PC-3 (cell line): ENCODE measurements at regions of chr2 and their contacts with region 1.

Region 1: GRCh38 chr2:171416009-171416926 is 17.5 kb downstream of the METTL8 start:
- DNase-seq: peak; percentile 96
- ATAC-seq: peak; percentile 98
- H3K4me3 ChIP-seq: no peak overlapping the region
- H3K27ac ChIP-seq: peak overlapping the region; percentile 23; the same call in 1 of the 2 replicates
- H3K4me1 ChIP-seq: peaks cover 22% of the 10 kb centered on the region
- H3K27me3 ChIP-seq: no peaks in the 10 kb centered on the region
- CTCF ChIP-seq: peak; percentile 95

Region 2: GRCh38 chr2:170973492-170974303 is 442.6 kb before region 1 on chr2:
- CTCF ChIA-PET with region 1: interaction called, 4 read pairs
- POLR2A ChIA-PET with region 1: no interaction called
- intact Hi-C with region 1: loop called (anchors 1 kb)
- DNase-seq: peak; percentile 93
- ATAC-seq: peak; percentile 82
- H3K4me3 ChIP-seq: peak overlapping the region; percentile 89
- H3K27ac ChIP-seq: 0 out of 2 replicates have a peak overlapping the region, but pooled peaks have one; percentile 32
- H3K4me1 ChIP-seq: peaks cover 12% of the 10 kb centered on the region
- H3K27me3 ChIP-seq: no peaks in the 10 kb centered on the region
- CTCF ChIP-seq: peak; percentile 90

Region 3: DNA sequence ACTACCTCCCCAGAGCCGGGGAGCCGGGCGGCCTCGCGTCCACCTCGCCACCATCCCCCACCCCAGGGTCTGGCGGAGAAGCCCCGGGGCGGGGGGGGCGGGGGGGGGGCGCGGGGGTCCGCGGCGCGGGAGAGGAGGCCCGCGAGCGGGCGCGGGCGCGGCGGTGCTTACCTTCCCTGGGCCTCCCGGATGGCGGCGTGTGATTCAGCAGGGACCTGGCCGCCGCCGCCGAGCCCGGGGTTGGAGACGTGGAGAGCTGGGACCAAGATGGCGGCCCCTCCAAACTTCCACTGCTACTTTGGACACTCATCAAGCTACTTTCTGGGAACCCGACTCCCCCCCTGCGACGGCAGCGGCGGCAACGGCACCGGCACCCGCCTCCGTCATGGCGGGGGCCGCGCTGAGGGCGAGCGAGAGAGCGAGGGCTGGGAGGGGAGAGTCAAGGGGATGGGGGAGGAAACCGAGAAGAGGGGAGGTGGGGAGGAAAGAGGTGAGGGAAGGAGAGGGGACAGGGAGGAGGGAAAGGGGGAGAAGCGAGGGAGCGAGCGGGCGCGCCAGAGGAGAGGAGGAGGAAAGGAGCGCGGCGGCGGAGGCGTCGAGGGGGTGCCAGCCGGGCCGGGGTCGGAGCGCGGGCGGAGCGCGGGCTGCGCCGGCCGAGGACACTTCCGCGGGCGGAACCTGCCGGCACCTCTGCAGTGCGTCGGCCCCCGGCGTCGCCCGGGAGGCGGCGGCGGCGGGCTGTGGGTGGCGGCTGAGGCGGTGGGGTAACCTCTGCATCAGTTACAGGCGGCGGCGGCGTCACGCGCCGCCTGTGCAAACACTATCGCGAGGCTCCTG is 255.9 kb before region 1 on chr2 and contains the start of gene TLK1:
- CTCF ChIA-PET with region 1: interaction called, 6 read pairs
- POLR2A ChIA-PET with region 1: no interaction called
- intact Hi-C with region 1: loop called (anchors 1 kb)
- DNase-seq: peak; percentile 73
- ATAC-seq: peak; percentile 67
- H3K4me3 ChIP-seq: peak within 1 kb of the TSS; percentile 100
- H3K27ac ChIP-seq: peak within 1 kb of the TSS; percentile 84
- H3K4me1 ChIP-seq: peaks cover 10% of the 10 kb centered on the region
- H3K27me3 ChIP-seq: no peaks in the 10 kb centered on the region
- CTCF ChIP-seq: no peak
- total RNA-seq, gene TLK1: 10.1 and 17.6 TPM in 2 replicates

Region 4: GRCh38 chr2:171225302-171225980 is 190.8 kb before region 1 on chr2:
- CTCF ChIA-PET with region 1: no interaction called
- POLR2A ChIA-PET with region 1: no interaction called
- intact Hi-C with region 1: loop called (anchors 5 kb)
- DNase-seq: peak; percentile 93
- ATAC-seq: peak; percentile 86
- H3K4me3 ChIP-seq: no peak overlapping the region
- H3K27ac ChIP-seq: no peak overlapping the region
- H3K4me1 ChIP-seq: peaks cover 46% of the 10 kb centered on the region
- H3K27me3 ChIP-seq: no peaks in the 10 kb centered on the region
- CTCF ChIP-seq: peak; percentile 47

Region 5: DNA sequence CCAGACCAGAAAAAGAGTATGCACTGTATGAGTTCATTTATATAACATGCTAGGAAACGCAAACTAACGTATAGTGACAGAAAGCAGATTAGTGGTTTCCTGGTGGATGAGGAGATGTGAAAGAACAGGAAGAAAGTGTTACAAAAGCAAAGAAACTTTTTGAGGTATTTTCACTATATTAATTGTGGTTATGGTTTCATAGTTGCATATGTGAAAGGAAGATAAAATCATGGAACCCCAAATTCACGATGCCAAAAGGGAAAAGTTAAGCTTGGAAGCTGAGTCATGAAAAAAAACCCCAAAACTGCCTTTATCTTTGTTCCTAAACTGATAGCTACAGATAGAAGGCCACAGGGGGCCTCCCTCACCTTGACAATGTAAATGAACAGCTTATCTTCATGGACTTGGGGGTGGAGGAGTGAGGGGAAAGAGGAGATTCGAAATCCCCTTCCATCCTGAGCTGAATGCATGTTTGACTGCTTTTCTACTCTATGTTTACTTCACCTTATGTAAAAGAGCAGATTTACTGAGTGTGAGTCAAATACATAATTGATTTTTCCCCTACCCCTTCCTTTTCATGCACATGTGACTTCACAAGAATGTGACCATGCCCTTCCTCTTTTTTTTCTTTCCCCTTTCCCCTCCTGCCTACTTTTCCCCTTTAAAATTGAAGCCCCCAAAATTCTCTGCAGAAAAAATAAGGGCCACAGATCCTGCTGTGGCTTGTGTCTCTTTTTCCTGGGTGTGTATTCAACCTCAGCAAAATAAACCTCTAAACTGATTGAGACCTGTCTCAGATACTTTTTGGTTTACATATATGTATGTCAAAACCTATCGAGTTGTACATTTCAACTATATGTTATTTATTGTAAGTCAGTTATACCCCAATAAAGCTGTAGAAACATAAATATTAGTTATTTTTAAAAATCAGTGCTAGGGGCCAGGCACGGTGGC is 155.5 kb before region 1 on chr2:
- CTCF ChIA-PET with region 1: no interaction called
- POLR2A ChIA-PET with region 1: no interaction called
- intact Hi-C with region 1: no loop called
- DNase-seq: peak; percentile 12
- ATAC-seq: peak; percentile 76
- H3K4me3 ChIP-seq: no peak overlapping the region
- H3K27ac ChIP-seq: no peak overlapping the region
- H3K4me1 ChIP-seq: peaks cover 8% of the 10 kb centered on the region; the same call in 1 of the 2 replicates
- H3K27me3 ChIP-seq: no peaks in the 10 kb centered on the region
- CTCF ChIP-seq: no peak

Region 6: DNA sequence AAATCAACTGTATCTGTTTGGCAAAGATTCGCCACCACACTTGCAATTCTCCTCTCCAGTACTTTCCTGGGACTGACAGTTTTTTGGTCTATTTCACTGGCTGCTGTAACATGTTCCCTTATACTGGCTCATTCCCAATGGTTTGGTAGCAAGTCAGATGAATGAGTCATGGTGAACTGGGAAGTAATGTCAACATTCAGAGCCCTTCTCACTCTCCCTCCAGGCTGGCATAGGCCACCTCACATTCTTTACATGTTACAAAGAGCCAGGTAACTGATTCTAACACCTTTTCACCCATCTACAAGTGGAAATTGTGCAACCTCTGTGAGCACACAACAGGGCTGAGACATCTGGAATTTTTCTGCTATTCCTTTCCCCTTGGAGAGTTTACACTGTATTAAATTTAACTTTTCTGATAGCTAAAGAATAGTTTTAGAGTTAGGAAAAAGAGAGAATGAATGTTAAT is 144.3 kb before region 1 on chr2:
- CTCF ChIA-PET with region 1: no interaction called
- POLR2A ChIA-PET with region 1: no interaction called
- intact Hi-C with region 1: loop called (anchors 1 kb)
- DNase-seq: peak; percentile 98
- ATAC-seq: peak; percentile 99
- H3K4me3 ChIP-seq: peak overlapping the region; percentile 19; the same call in 1 of the 2 replicates
- H3K27ac ChIP-seq: peak overlapping the region; percentile 61
- H3K4me1 ChIP-seq: peaks cover 24% of the 10 kb centered on the region
- H3K27me3 ChIP-seq: no peaks in the 10 kb centered on the region
- CTCF ChIP-seq: no peak

Region 7: DNA sequence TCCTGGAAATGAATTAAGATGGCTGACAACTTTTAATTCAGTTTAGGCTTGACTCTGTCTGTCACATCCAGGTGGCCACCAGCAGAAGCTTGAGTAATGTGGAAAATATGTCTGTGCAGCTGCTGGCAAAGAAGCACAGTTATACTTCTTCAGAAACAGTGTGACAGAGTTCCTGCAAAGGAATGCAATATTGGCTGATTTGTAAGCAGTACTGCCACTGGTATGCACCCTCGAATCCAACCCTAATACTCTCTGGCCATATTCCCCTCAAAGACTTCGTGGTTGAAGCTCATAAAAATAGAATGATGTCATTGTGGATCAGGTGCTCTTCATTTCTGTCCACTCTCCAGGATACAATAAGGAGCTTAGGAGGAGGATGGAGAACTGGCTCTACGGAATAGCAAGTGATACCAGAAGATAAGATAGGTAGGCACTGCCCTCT is 68.7 kb before region 1 on chr2:
- CTCF ChIA-PET with region 1: no interaction called
- POLR2A ChIA-PET with region 1: no interaction called
- intact Hi-C with region 1: loop called (anchors 2 kb)
- DNase-seq: peak; percentile 82
- ATAC-seq: peak; percentile 91
- H3K4me3 ChIP-seq: no peak overlapping the region
- H3K27ac ChIP-seq: peak overlapping the region; percentile 65
- H3K4me1 ChIP-seq: peaks cover 25% of the 10 kb centered on the region
- H3K27me3 ChIP-seq: no peaks in the 10 kb centered on the region
- CTCF ChIP-seq: no peak

Region 8: DNA sequence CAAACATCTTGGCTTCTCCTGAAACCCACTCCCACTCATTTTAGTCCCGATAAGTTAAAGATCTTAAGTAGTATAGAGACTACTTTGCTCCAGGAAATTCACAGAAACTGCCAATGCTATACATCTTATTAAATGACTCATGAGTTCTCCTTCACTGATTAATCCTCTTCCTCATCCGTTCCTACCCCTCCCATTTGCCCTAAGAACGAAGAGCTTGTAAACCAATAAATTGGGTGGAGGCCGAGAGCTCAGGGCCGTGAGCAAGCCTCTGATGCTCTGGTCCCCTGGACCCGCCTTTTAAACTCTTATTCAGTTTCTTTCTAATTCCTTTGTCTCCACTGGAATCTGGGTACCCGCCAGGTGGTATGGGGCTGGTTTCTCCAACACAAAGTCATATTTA is 51.0 kb before region 1 on chr2:
- CTCF ChIA-PET with region 1: no interaction called
- POLR2A ChIA-PET with region 1: no interaction called
- intact Hi-C with region 1: loop called (anchors 1 kb)
- DNase-seq: peak; percentile 92
- ATAC-seq: peak; percentile 91
- H3K4me3 ChIP-seq: peak overlapping the region; percentile 58
- H3K27ac ChIP-seq: peak overlapping the region; percentile 83
- H3K4me1 ChIP-seq: peaks cover 16% of the 10 kb centered on the region
- H3K27me3 ChIP-seq: no peaks in the 10 kb centered on the region
- CTCF ChIP-seq: no peak